Lower lobe of right lung (tissue), 2 donors: ENCODE measurements at regions of chr16 and their contacts with region 1.

Region 1: GRCh38 chr16:50202926-50203624 is 50.0 kb downstream of the TENT4B start:
- DNase-seq: no peak
- ATAC-seq: peak; percentile 76 to 82
- H3K4me3 ChIP-seq: no peak overlapping the region
- H3K27ac ChIP-seq: peak overlapping the region; percentile 61
- H3K4me1 ChIP-seq: peaks cover 66% of the 10 kb centered on the region
- H3K27me3 ChIP-seq: no peaks in the 10 kb centered on the region
- CTCF ChIP-seq: no peak

Region 2: DNA sequence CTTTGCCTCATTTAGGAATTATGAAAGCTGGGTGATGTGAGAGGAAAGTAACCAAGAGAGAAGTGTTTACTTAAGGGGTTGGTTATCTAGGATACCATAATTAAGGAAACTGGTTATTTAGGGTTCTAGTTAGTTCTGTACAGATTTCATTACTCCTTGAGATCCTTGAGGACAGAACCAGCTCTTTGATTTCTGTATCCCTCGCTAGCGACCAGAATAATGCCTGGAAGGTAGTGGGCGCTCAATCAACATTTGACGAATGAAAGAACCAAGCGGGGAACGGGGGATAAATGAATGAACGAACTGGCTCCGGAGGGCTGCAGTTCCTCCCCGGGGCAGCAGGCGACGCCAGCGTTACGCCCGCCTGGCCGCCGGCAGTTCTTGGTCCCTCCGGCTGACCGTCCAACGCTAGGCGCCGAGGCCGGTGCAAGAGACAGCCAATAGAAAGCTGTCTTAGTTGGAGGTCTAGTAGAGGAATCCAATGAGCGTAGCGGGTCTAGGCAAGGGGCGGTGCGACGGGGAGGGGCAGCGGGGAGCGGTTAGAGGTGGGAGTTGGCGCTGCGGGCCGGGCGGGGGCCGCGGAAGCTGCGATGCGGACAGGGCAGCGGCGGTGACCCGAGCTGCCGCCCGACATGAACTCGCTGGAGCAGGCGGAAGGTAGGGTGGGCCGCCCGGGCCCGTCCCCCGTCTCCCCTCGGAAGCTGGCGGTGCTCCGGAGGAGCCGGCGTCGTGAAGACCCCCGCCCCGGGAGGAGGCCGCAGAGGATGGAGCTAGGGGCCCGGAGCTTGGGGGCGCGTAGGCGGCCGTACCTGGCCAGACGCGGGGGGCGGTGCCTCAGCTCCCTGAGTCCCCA is 178.2 kb before region 1 on chr16 and contains the start of gene CNEP1R1:
- intact Hi-C with region 1: loop called (anchors 10 kb)
- DNase-seq: peak; percentile 94
- ATAC-seq: peak; percentile 100
- H3K4me3 ChIP-seq: peak within 1 kb of the TSS; percentile 98
- H3K27ac ChIP-seq: peak within 1 kb of the TSS; percentile 90
- H3K4me1 ChIP-seq: peaks cover 31% of the 10 kb centered on the region
- H3K27me3 ChIP-seq: no peaks in the 10 kb centered on the region
- CTCF ChIP-seq: peak; percentile 99
- total RNA-seq, gene CNEP1R1: 25.6 TPM